Cardiac septum (tissue), 1 donor: ENCODE measurements at regions of chr18 and their contacts with region 1.

Region 1: DNA sequence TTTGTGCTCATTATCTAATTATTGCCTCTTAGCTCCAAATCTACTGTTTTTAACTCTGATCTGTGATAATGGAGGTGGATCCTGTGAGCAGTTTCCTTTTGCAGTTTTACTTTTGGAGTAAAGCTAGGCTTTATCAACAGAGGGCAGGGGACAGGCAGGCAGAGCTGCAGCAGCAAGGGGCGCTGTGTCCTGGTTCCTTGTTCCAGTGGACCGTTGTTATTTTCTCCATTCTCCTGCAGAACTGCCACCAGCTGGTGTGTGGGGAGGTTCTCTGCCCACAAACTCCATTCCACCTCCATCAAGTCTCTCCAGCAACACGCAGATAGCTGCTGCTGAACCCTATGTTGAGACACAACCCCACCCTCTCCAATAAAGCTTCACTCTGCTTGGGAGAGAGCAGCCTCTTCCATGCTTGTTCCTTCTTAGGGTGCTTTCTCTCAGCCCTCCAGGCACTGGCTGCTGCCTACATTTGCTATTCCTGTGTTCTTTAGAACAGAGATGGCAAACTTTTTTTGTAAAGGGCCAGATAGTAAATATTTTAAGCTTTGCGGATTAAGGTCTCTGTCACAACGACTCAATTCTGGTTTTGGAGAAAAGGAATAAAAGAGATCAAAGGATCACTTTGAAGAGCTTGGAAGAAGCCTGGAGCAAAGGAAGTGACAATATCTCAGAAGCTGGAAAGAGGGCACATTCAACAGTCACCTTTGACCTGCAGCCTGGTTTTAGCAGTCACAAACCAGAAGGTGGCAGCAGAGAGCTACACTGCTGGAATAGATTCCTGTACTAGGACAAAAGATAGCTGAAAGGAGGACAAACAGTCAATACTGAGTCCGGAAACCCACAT is 208.8 kb downstream of the CCDC178 start:
- DNase-seq: no peak

Region 2: DNA sequence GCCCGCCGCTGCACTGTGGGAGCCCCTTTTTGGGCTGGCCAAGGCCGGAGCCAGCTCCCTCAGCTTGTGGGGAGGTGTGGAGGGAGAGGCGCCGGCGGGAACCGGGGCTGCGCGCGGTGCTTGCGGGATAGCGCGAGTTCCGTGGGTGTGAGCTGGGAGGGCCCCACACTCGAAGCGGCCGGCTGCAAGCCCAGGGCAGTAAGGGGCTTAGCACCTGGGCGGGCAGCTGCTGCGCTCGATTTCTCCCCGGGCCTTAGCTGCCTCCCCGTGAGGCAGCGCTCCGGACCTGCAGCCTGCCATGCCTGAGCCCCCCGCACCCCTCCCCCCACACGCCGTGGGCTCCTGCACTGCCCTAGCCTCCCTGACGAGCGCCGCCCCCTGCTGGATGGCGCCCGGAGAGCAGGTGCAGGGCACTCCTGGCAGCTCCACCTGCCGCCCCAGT is 84.5 kb after region 1 on chr18:
- intact Hi-C with region 1: no loop called
- DNase-seq: no peak

Region 3: DNA sequence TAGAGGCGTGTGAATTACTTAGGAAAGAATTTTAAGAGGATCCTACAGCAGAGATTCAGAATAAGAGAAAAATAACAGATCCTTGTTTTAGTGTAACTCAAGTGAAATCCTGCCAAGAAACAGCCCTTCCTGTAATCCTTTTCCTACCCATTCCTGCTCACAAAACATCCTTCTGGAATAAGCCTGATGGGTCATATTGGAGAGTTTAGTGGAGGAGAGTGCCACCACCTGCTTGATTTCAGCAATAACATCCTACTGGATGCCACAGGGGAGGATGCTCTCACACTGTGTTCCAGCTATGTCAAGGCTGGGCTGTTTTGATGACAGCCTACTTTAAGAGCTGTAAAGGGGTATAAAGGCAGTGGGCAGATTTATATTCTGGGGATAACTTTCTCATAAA is 263.6 kb after region 1 on chr18:
- intact Hi-C with region 1: loop called (anchors 5 kb)
- DNase-seq: no peak

Region 4: GRCh38 chr18:33755931-33756560 is 524.4 kb after region 1 on chr18:
- intact Hi-C with region 1: loop called (anchors 5 kb)
- DNase-seq: no peak